ENCODE measurements at regions of chr11 and their contacts with region 1.

Region 1: DNA sequence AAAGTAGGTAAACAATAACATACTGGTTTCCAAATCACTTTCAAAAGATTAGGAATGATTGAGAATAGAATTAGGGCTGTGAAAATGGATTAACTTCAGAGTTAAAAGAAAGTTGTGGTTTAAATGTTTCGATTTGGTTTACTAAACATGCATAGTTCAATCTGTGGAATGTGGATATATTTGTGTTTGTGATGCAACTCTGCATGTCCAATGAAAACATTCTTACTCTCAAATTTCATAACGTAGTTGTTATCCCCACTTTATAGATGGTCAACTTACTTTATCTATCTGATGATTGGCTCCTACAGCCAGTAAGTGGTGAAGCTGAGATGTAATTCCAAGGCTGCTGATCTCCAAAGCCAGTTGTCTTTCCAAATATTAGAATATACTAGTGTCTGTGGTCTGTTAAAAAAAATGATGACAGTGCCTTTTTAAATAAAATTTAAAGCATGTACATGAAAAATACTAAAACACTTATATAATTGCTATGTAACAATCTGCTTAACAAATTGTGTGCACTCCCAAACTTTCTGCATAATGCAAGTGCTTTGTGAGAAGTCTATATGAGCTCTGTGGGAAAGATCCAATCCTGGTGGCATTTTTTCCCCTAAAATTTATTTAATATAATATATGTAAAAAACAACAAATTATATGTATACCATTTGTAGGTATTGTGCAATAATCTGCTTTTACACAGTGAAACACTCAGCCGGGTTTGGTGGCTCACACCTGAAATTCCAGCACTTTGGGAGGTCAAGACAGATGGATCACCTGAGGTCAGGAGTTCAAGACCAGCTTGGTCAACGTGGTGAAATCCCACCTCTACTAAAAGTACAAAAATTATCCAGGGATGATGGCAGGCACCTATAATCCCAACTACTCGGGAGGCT is 9.7 kb upstream of the SIK3 start:
- DNase-seq: no peak
- ATAC-seq: no peak
- H3K4me3 Mint-ChIP-seq: no peak overlapping the region
- H3K27ac Mint-ChIP-seq: no peak overlapping the region
- H3K4me1 Mint-ChIP-seq: no peaks in the 10 kb centered on the region
- H3K27me3 Mint-ChIP-seq: no peaks in the 10 kb centered on the region
- CTCF ChIP-seq: no peak

Region 2: DNA sequence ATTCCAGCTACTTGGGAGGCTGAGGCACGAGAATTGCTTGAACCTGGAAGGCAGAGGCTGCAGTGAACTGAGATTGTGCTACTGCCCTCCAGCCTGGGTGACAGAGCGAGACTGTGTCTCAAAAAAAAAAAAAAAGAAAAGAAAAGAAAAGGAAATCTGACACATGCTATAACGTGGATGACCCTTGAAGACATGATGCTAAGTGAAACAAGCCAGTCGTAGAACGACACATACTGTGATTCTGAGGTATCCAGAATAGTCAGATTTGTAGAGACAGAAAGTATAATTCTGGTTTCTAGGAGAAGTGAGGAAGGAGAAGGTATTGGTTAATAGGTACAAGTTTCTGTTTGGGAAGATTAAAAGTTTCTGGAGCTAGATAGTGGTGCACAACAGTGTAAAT is 309.6 kb before region 1 on chr11:
- CTCF ChIA-PET with region 1: interaction called, 18 read pairs
- POLR2A ChIA-PET with region 1: no interaction called
- intact Hi-C with region 1: no loop called
- DNase-seq: no peak
- ATAC-seq: no peak
- H3K4me3 Mint-ChIP-seq: no peak overlapping the region
- H3K27ac Mint-ChIP-seq: no peak overlapping the region
- H3K4me1 Mint-ChIP-seq: no peaks in the 10 kb centered on the region
- H3K27me3 Mint-ChIP-seq: peaks cover 5% of the 10 kb centered on the region
- CTCF ChIP-seq: no peak

Region 3: DNA sequence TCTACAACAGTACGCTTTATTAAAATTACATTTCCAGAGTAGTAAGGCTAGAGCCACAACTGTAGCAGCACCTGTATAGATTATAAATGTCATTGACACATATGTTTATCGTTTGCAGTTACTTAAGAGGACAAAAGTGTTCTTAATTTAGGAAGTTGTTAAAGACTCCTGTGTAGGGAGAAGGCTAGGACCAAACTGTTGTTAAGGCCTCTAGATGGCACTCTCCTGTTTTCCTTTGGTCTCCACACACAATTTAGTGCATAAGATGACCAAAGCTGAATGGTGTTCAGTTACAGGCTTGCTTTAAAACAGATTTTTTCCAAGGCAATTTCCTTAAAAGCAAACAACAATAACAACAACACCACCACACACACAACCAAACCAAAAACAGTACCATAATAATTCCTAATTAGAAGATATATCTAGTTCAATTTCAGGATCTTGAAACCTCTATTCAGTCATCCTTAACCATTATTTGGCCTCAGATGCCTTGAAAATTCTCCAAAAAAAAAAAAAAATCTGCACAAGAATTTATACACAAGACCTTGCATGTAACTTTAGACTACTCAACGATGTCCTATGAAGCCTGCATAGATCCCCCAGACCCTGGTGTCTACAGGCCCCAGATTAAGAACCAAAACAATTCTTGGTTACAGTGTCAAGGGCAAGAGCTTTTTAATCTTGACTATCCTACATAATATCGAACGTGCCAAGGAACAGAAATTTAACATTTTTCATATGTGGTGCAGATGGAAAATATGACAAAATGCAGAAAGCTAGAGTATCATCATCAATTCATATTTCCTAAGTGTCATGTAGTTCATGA is 227.9 kb before region 1 on chr11:
- CTCF ChIA-PET with region 1: interaction called, 72 read pairs
- POLR2A ChIA-PET with region 1: no interaction called
- intact Hi-C with region 1: no loop called
- DNase-seq: peak; percentile 34
- ATAC-seq: peak; percentile 77
- H3K4me3 Mint-ChIP-seq: no peak overlapping the region
- H3K27ac Mint-ChIP-seq: no peak overlapping the region
- H3K4me1 Mint-ChIP-seq: peaks cover 19% of the 10 kb centered on the region
- H3K27me3 Mint-ChIP-seq: no peaks in the 10 kb centered on the region
- CTCF ChIP-seq: peak; percentile 71

Region 4: DNA sequence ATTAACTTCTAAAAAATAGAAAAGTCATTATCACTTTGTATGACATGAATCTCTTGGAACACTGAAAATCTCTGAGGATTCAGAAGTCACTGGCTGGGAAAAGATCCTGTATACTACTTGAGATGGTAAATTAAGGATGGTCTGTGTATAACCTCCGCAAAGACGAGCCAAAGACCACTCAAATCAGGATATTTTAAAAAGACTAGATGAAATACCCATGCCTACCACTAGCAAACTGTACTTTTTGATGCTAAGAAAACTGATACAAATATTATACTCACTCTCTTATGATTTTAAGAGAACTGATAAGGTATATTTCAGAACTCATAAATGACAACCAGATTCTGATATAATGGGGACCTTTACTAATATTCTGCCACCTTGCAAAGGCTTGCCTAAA is 191.9 kb before region 1 on chr11:
- CTCF ChIA-PET with region 1: interaction called, 11 read pairs
- POLR2A ChIA-PET with region 1: no interaction called
- intact Hi-C with region 1: no loop called
- DNase-seq: no peak
- ATAC-seq: no peak
- H3K4me3 Mint-ChIP-seq: no peak overlapping the region
- H3K27ac Mint-ChIP-seq: no peak overlapping the region
- H3K4me1 Mint-ChIP-seq: peaks cover 11% of the 10 kb centered on the region
- H3K27me3 Mint-ChIP-seq: no peaks in the 10 kb centered on the region
- CTCF ChIP-seq: no peak

Region 5: GRCh38 chr11:117226388-117227385 is 118.7 kb after region 1 on chr11:
- CTCF ChIA-PET with region 1: interaction called, 19 read pairs
- POLR2A ChIA-PET with region 1: no interaction called
- intact Hi-C with region 1: no loop called
- DNase-seq: peak; percentile 51
- ATAC-seq: peak; percentile 48
- H3K4me3 Mint-ChIP-seq: no peak overlapping the region
- H3K27ac Mint-ChIP-seq: peak overlapping the region; percentile 20
- H3K4me1 Mint-ChIP-seq: peaks cover 29% of the 10 kb centered on the region
- H3K27me3 Mint-ChIP-seq: no peaks in the 10 kb centered on the region
- CTCF ChIP-seq: peak; percentile 86

Measured in activated CD8-positive, alpha-beta T cell treated with anti-CD3 and anti-CD28 coated beads for 36 hours (primary cell).